HEK293 (cell line): ENCODE measurements at regions of chr22 and their contacts with region 1.

Region 1: GRCh38 chr22:46563381-46564083 is 26.1 kb upstream of the CELSR1 start:
- H3K4me3 ChIP-seq: no peak overlapping the region
- H3K27ac ChIP-seq: no peak overlapping the region
- H3K4me1 ChIP-seq: no peaks in the 10 kb centered on the region
- CTCF ChIP-seq: peak; percentile 63

Region 2: DNA sequence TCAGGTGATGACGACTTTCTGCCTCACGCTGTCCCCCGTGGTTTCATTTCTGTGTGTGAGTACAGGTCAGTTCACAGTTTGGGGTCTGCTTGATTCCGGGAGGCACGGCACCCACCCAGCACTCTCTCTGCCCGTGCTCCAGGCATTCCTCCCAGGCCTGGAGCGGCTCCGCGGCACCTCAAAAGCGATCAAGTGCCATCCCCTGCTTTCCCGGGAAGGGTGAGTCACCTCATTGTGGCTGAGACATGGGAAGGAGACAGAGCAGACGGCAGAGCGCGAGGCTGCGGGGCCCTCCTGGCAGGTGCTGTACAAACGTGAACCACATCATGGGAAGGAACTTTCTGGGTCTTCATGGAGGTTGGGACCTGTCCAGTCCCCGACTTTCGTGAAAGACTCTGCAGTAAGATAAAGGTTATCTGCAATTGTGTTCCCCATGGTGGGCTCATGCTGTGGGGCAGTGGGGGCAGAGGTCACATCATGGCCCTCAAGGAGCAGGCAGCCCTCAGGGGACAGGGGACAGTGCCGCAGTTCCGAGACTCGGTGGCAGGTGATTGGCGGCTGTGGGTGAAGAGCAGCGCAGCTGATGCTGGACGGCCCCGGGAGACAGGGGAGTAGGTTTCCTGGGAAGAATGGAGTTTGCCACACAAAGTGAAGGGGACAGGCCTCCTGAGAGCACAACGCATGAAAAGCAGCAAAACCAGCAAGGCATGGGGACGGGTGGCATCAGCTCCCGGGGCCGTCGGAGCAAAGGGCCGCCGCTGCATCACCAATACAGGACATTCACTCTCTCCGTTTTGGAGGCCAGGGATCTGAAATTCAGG is 91.4 kb before region 1 on chr22:
- CTCF ChIA-PET with region 1: no interaction called
- POLR2A ChIA-PET with region 1: no interaction called
- H3K4me3 ChIP-seq: no peak overlapping the region
- H3K27ac ChIP-seq: no peak overlapping the region
- H3K4me1 ChIP-seq: no peaks in the 10 kb centered on the region
- CTCF ChIP-seq: no peak

Region 3: DNA sequence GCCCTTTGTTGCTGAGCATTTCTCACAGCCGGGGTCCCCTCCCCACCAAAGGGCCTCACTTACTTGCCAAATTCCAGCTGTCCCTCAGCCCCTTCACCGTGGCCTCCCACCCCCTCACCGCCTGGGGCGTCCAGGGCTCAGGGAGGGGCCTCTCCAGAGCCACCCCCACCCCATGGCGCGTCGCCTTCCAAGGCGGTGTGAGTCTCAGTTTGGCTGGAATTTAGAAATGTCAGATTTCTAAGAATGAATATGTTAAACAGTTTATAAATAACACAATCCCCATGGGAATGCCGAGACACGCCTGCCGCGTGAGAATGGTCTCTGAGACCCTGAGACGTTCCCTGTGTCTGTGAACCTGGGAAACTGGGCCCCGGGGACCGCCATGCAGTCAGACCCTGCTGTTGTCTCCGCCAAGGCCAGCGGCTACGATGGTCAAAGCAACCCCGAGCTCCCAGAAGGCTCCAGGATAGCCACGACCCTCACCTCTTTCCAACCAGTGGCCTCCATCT is 55.0 kb before region 1 on chr22:
- CTCF ChIA-PET with region 1: no interaction called
- POLR2A ChIA-PET with region 1: no interaction called
- H3K4me3 ChIP-seq: no peak overlapping the region
- H3K27ac ChIP-seq: no peak overlapping the region
- H3K4me1 ChIP-seq: no peaks in the 10 kb centered on the region
- CTCF ChIP-seq: no peak

Region 4: DNA sequence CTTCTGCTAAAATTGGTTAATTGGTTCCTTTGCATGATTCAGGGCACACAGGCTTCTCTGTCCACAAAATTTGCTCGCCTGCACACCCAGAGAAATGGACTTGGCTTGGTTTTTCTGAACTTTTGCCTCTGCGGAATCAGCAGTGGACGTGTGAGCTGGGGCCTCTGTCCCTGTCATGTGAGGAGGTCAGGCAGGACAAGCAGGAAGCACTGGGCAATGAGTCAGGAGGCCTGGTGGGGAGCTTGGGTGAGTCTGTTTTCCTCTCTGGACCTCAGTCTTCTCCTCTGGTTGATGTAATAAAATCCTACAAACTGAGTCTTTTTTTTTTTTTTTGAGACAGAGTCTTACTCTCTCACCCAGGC is 15.7 kb before region 1 on chr22:
- CTCF ChIA-PET with region 1: interaction called, 21 read pairs
- POLR2A ChIA-PET with region 1: interaction called, 6 read pairs
- H3K4me3 ChIP-seq: no peak overlapping the region
- H3K27ac ChIP-seq: no peak overlapping the region
- H3K4me1 ChIP-seq: no peaks in the 10 kb centered on the region
- CTCF ChIP-seq: no peak

Region 5: GRCh38 chr22:46576556-46577367 is 13.2 kb after region 1 on chr22:
- CTCF ChIA-PET with region 1: interaction called, 10 read pairs
- POLR2A ChIA-PET with region 1: no interaction called
- H3K4me3 ChIP-seq: peak overlapping the region; percentile 55
- H3K27ac ChIP-seq: peak overlapping the region; percentile 80; the same call in 1 of the 2 replicates
- H3K4me1 ChIP-seq: peaks cover 24% of the 10 kb centered on the region
- CTCF ChIP-seq: no peak

Region 6: DNA sequence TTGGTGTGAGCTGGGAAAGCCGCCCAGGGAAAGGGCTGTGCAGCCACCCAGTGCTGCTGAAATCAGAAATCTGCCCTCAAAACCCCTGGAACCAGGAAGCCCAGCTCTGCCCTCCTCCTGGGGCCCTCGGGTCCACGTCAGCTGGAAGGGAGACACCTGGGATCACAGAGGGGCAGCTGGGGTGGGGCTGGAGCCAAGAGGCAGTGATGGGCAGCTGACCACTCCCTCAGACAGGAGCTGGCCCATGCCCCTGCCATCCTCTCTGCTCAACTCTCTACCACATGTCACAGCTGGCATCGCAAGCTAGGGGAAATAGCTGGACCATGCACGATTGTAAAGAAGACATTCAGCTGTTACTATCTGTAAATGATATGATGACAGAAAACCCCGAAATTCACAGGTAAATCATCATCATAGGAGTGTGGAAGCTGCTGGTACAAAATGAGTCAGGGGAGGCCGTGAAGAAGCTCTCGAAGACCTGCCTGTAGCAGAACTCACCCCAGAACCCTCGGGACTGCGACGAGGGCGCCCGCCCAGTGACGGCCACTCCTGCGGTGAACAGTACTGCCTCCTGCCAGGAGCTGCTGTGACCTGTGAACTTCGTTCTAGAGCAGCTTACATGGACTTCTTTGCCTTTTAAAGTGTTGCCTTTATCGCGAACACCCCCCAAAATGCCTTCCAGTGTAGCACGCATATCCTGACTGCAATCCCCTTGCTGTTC is 118.6 kb after region 1 on chr22:
- CTCF ChIA-PET with region 1: interaction called, 12 read pairs
- POLR2A ChIA-PET with region 1: no interaction called
- H3K4me3 ChIP-seq: no peak overlapping the region
- H3K27ac ChIP-seq: no peak overlapping the region
- H3K4me1 ChIP-seq: no peaks in the 10 kb centered on the region
- CTCF ChIP-seq: no peak

Region 7: DNA sequence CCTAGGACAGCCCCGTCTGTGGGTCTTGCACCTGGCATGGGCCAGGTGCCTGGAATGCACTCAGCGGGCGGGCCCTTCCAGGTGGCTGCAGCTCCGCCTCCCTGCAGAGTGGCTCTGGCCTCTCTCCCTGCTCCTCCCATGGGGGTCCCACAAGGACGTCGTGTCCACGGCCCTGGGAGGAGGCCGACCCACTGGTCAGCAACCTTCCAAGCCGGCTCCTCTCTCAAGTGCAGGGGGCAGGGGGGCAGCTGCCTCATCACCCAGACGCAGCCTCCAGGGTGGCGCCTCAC is 132.6 kb after region 1 on chr22:
- CTCF ChIA-PET with region 1: no interaction called
- POLR2A ChIA-PET with region 1: no interaction called
- H3K4me3 ChIP-seq: no peak overlapping the region
- H3K27ac ChIP-seq: no peak overlapping the region
- H3K4me1 ChIP-seq: no peaks in the 10 kb centered on the region
- CTCF ChIP-seq: no peak

Region 8: DNA sequence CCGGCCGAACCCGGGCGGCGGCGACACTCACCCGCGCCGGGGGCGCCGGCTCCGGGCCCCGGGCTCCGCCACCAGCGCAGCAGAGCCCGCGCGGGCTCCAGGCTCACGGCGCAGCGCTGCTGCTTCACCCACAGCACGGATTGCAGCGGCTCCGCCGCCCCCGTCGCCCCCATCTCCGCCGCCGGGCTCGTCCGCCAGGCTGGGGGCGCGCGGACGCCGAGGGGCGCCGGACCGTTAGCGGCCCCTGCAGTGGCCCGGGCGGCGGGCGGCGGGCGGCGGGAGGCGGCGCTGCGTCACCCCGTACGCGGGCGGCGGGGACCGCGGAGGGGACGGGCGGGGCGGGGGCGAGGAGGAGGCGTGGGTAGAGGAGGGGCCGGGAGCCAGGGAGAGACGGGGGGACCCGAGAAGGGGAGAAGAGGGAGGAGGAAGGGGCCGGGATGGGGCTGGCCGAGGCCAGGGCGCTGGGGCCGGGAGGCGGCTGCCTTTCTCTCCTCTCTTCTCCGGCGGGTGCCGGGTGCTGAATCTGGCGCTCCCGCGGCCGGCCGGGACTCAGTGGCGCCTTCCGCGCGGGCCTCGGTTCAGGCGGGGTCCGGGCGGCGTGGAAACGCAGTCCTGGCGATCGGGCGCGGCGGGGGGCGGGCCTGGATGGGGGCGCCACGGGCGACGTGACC is 174.6 kb after region 1 on chr22 and contains the start of gene CERK:
- CTCF ChIA-PET with region 1: interaction called, 11 read pairs
- POLR2A ChIA-PET with region 1: interaction called, 3 read pairs
- H3K4me3 ChIP-seq: peak within 1 kb of the TSS; percentile 73
- H3K27ac ChIP-seq: peak within 1 kb of the TSS; percentile 86
- H3K4me1 ChIP-seq: peaks cover 38% of the 10 kb centered on the region
- CTCF ChIP-seq: no peak

Region 9: DNA sequence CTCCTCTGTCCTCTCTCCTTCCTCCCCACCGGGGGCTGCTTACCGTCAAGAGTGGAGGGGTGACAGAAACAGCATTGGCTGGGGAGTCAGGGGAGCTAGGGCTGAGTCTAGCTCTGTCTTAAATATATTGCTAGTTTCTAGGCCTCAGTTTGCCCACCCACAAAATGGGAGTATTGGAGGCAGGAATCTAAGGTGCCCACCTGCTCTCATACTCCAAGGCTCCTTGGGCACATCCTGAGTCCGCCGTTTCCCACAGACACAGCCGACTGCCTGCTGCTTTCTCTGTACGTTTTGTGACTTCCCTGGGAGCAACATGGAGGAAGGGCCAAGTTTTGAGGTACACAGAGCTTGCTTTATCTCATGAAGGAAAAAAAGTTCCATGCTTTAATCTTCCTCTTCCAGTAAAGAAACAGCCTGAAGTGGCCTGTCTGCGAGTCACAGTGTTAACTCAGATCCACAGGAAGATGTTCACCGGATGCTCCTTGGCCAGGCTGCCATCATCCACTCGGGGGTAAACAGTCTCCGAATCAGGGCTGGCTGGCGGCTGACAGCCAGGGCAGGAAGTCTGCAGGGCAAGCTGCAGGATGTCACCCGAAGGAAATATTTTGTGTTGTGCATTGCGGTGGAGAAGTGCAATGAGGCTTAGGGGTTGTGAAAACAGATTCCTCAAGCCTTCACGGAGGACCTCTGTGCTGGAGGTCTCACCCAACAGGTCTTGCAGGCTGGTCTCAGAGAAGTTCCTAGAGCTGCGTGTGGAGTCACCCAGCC is 185.6 kb after region 1 on chr22:
- CTCF ChIA-PET with region 1: no interaction called
- POLR2A ChIA-PET with region 1: no interaction called
- H3K4me3 ChIP-seq: no peak overlapping the region
- H3K27ac ChIP-seq: no peak overlapping the region
- H3K4me1 ChIP-seq: no peaks in the 10 kb centered on the region
- CTCF ChIP-seq: no peak